Activated CD4-positive, alpha-beta T cell treated with anti-CD3 and anti-CD28 coated beads, Interleukin-2, amount 10 ng/mL, durations not matched to agents 7 days and 5 days (primary cell): ENCODE measurements at regions of chr12 and their contacts with region 1.

Region 1: GRCh38 chr12:50074936-50075807 is 10.0 kb upstream of the SMARCD1 start:
- DNase-seq: peak; percentile 83
- H3K4me3 Mint-ChIP-seq: no peak overlapping the region
- H3K27ac Mint-ChIP-seq: peak overlapping the region; percentile 52
- H3K4me1 Mint-ChIP-seq: peaks cover 7% of the 10 kb centered on the region
- H3K27me3 Mint-ChIP-seq: no peaks in the 10 kb centered on the region

Region 2: GRCh38 chr12:49583366-49584094 is 491.6 kb before region 1 on chr12:
- CTCF ChIA-PET with region 1: no interaction called
- POLR2A ChIA-PET with region 1: no interaction called
- DNase-seq: no peak
- H3K4me3 Mint-ChIP-seq: no peak overlapping the region
- H3K27ac Mint-ChIP-seq: no peak overlapping the region
- H3K4me1 Mint-ChIP-seq: peaks cover 22% of the 10 kb centered on the region
- H3K27me3 Mint-ChIP-seq: no peaks in the 10 kb centered on the region

Region 3: DNA sequence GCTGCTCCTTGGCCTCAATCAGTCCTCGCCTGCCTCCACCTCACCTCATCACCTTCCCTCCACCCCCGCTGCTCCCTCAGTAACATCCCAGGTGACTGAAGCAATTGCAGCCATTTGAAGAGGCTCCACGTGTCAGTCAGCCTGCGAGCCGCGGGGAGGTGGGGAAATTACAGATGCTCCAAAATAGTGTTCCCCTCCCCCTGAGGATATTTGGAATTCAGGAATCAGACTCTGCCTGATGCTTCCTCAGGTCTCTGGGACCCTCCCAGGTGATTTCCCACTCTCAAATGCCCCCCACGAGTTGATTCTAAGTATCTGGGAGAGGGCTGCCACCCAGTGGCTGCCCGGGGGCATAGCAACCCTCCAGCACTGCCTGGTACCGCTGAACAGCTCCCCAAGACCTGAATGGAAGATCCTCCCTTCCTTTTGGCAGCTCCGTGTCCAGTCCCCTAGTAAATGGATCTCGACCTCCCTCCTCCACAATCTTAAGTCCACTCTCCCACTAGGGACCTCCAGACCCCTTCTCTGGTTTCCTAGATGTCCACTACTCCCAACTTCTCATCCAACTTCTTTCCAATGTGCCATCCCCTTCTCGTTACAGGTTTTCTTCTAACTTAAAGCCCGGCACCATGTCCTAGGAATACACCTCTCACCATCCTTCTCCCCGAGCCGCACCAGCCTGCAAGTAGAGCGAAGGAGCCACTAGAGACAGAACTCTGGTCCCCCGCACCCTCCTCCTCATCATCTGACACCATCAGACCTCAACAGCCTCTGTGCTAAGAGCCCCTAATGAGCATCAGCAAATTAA is 19.1 kb before region 1 on chr12:
- CTCF ChIA-PET with region 1: interaction called, 41 read pairs
- POLR2A ChIA-PET with region 1: no interaction called
- DNase-seq: peak; percentile 63
- H3K4me3 Mint-ChIP-seq: peak overlapping the region; percentile 28
- H3K27ac Mint-ChIP-seq: no peak overlapping the region
- H3K4me1 Mint-ChIP-seq: peaks cover 44% of the 10 kb centered on the region
- H3K27me3 Mint-ChIP-seq: peaks cover 44% of the 10 kb centered on the region